ENCODE measurements at regions of chr14 and their contacts with region 1.

Region 1: DNA sequence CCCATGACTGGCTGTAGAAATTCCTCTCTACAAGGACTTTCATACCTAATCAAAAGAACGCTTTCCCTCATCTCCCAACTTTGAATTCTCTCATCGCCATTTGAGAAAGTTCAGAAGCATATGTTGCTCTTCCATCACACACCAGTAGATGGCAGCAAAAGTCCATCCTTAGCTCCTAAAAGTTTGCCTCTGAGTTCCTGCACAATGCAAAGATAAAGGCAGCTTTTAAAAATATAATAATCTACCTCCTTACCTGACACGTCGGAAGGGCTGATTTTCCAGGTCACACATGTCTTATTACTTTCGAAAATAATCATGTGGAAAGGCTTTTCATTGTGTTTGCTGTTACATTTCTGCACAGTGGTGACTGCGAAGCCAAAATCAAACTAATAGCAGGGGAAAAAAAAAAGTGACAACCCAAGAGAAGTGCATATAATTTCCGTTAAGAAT is 456.7 kb upstream of the SEL1L start:
- DNase-seq: peak; percentile 57
- H3K4me3 ChIP-seq: no peak overlapping the region
- H3K27ac ChIP-seq: no peak overlapping the region
- H3K4me1 ChIP-seq: no peaks in the 10 kb centered on the region
- CTCF ChIP-seq: peak; percentile 91

Region 2: GRCh38 chr14:81565441-81566290 is 424.7 kb before region 1 on chr14:
- CTCF ChIA-PET with region 1: no interaction called
- POLR2A ChIA-PET with region 1: no interaction called
- intact Hi-C with region 1: loop called (anchors 5 kb)
- DNase-seq: peak; percentile 54
- H3K4me3 ChIP-seq: no peak overlapping the region
- H3K27ac ChIP-seq: no peak overlapping the region
- H3K4me1 ChIP-seq: no peaks in the 10 kb centered on the region
- CTCF ChIP-seq: peak; percentile 86

Region 3: GRCh38 chr14:81625343-81625742 is 365.0 kb before region 1 on chr14:
- CTCF ChIA-PET with region 1: no interaction called
- POLR2A ChIA-PET with region 1: no interaction called
- intact Hi-C with region 1: loop called (anchors 10 kb)
- DNase-seq: peak; percentile 65
- H3K4me3 ChIP-seq: no peak overlapping the region
- H3K27ac ChIP-seq: no peak overlapping the region
- H3K4me1 ChIP-seq: peaks cover 9% of the 10 kb centered on the region
- CTCF ChIP-seq: peak; percentile 85

Region 4: GRCh38 chr14:81710234-81710845 is 280.0 kb before region 1 on chr14:
- CTCF ChIA-PET with region 1: no interaction called
- POLR2A ChIA-PET with region 1: no interaction called
- intact Hi-C with region 1: loop called (anchors 2 kb)
- DNase-seq: peak; percentile 52
- H3K4me3 ChIP-seq: no peak overlapping the region
- H3K27ac ChIP-seq: no peak overlapping the region
- H3K4me1 ChIP-seq: no peaks in the 10 kb centered on the region
- CTCF ChIP-seq: peak; percentile 87

Region 5: GRCh38 chr14:82009076-82009475 is 18.7 kb after region 1 on chr14:
- CTCF ChIA-PET with region 1: no interaction called
- POLR2A ChIA-PET with region 1: no interaction called
- intact Hi-C with region 1: no loop called
- DNase-seq: peak; percentile 1
- H3K4me3 ChIP-seq: no peak overlapping the region
- H3K27ac ChIP-seq: no peak overlapping the region
- H3K4me1 ChIP-seq: no peaks in the 10 kb centered on the region
- CTCF ChIP-seq: peak; percentile 72